ENCODE measurements at regions of chr4 and their contacts with region 1.

Region 1: DNA sequence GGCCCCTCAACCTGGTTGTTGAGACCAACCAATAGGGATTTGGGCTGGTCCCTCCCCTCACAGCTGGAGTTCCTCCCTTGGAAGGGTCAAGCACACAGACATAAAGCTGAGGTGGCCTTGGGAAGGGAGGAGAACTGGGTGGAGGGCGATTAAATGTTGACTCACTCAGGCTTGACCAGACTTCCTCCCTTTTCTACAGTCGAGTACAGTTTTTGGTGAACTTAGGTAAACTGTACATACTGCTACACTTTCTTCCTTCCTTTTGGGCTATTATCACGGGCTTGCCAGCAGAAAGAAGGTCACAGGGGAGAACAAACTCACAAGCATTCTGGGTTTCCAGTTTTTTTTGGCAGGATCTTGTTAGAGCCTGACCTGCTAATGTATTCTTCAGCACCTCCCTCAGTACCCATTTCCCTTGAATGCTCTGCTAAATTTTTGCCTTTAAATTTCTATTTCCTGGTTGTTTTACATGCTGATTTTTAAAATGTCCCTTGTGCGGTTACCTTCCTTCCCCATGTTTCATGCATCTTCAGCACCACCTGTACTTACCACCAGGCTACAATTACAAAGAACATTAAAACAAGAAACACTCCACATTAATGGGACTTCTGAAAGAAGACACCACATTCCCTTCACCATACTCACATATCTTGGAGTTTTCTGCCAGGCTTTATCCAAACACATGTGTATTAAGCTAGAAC is 135.2 kb upstream of the RASGEF1B start:
- DNase-seq: peak; percentile 79
- ATAC-seq: peak; percentile 51
- H3K4me3 ChIP-seq: peak overlapping the region in 4 of 5 experiments; percentile 21 to 40 (median 34)
- H3K4me3 Mint-ChIP-seq: peak overlapping the region; percentile 69
- H3K27ac ChIP-seq: peak overlapping the region; percentile 73 to 89
- H3K27ac Mint-ChIP-seq: peak overlapping the region; percentile 84
- H3K4me1 ChIP-seq: peaks cover 61 to 67% of the 10 kb centered on the region in 2 donors
- H3K4me1 Mint-ChIP-seq: peaks cover 58% of the 10 kb centered on the region
- H3K27me3 ChIP-seq: no peaks in the 10 kb centered on the region
- H3K27me3 Mint-ChIP-seq: no peaks in the 10 kb centered on the region
- CTCF ChIP-seq: peak; percentile 47

Region 2: DNA sequence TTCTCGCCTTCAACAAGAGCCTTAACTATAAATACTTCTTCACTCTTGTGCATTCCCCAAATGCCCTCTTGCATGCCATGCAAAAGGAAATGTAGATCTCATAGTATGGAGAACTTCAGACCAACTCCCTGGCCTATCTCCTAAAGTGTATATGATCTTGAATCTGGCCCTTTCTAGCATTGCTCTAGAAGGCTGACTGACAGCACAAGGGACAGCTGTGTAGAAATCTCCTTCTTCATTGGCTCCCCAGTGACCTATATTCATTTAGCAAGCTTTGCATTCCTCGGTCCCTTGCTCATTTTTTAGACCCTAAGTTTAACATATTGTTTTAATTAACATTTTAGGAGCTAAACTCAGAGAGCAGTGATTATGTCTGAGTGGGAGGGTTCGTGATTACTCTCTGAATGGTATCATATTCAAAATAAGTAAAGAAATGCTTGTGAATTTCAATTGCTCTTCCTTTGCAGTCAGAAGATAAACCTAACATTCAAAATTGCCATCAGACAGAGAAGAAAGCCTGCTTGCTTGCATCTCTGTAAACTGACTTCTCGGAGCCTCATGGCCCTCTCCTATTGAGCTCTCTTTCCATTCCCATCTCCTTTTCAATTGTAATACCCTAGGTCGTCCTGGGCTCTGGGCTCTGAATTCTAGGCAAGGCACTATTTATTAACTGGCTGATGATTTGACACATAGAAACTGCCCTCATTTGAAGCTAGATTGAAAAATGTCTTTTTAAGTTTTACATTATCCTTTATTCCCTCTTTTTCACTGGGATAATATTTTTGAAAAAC is 271.6 kb before region 1 on chr4:
- CTCF ChIA-PET with region 1: no interaction called
- POLR2A ChIA-PET with region 1: no interaction called
- intact Hi-C with region 1: no loop called
- DNase-seq: no peak
- ATAC-seq: no peak
- H3K4me3 ChIP-seq: no peak overlapping the region
- H3K4me3 Mint-ChIP-seq: no peak overlapping the region
- H3K27ac ChIP-seq: no peak overlapping the region
- H3K27ac Mint-ChIP-seq: no peak overlapping the region
- H3K4me1 ChIP-seq: no peaks in the 10 kb centered on the region
- H3K4me1 Mint-ChIP-seq: no peaks in the 10 kb centered on the region
- H3K27me3 ChIP-seq: no peaks in the 10 kb centered on the region
- H3K27me3 Mint-ChIP-seq: no peaks in the 10 kb centered on the region
- CTCF ChIP-seq: no peak

Region 3: GRCh38 chr4:81494031-81494431 is 112.9 kb before region 1 on chr4:
- CTCF ChIA-PET with region 1: no interaction called
- POLR2A ChIA-PET with region 1: interaction called, 4 read pairs
- intact Hi-C with region 1: loop called (anchors 5 kb)
- DNase-seq: peak; percentile 76
- ATAC-seq: peak; percentile 37
- H3K4me3 ChIP-seq: peak overlapping the region in 2 of 5 experiments; percentile 1 to 50
- H3K4me3 Mint-ChIP-seq: peak overlapping the region; percentile 76
- H3K27ac ChIP-seq: peak overlapping the region; percentile 59 to 80
- H3K27ac Mint-ChIP-seq: peak overlapping the region; percentile 85
- H3K4me1 ChIP-seq: peaks cover 43 to 54% of the 10 kb centered on the region in 2 donors
- H3K4me1 Mint-ChIP-seq: peaks cover 49% of the 10 kb centered on the region
- H3K27me3 ChIP-seq: no peaks in the 10 kb centered on the region
- H3K27me3 Mint-ChIP-seq: no peaks in the 10 kb centered on the region
- CTCF ChIP-seq: no peak

Region 4: GRCh38 chr4:81505004-81505598 is 101.8 kb before region 1 on chr4:
- CTCF ChIA-PET with region 1: no interaction called
- POLR2A ChIA-PET with region 1: interaction called, 9 read pairs
- intact Hi-C with region 1: loop called (anchors 5 kb)
- DNase-seq: peak; percentile 85
- ATAC-seq: peak; percentile 69
- H3K4me3 ChIP-seq: peak overlapping the region in 3 of 5 experiments; percentile 6 to 33 (median 28)
- H3K4me3 Mint-ChIP-seq: peak overlapping the region; percentile 81
- H3K27ac ChIP-seq: peak overlapping the region; percentile 56 to 81
- H3K27ac Mint-ChIP-seq: peak overlapping the region; percentile 88
- H3K4me1 ChIP-seq: peaks cover 45 to 58% of the 10 kb centered on the region in 2 donors
- H3K4me1 Mint-ChIP-seq: peaks cover 70% of the 10 kb centered on the region
- H3K27me3 ChIP-seq: no peaks in the 10 kb centered on the region
- H3K27me3 Mint-ChIP-seq: no peaks in the 10 kb centered on the region
- CTCF ChIP-seq: no peak

Region 5: GRCh38 chr4:81565142-81565870 is 41.6 kb before region 1 on chr4:
- CTCF ChIA-PET with region 1: interaction called, 5 read pairs
- POLR2A ChIA-PET with region 1: no interaction called
- intact Hi-C with region 1: loop called (anchors 1 kb)
- DNase-seq: no peak
- ATAC-seq: no peak
- H3K4me3 ChIP-seq: peak overlapping the region in 2 of 5 experiments; percentile 5 to 6
- H3K4me3 Mint-ChIP-seq: peak overlapping the region; percentile 61
- H3K27ac ChIP-seq: peak overlapping the region; percentile 4 to 21
- H3K27ac Mint-ChIP-seq: peak overlapping the region; percentile 64
- H3K4me1 ChIP-seq: peaks cover 54 to 65% of the 10 kb centered on the region in 2 donors
- H3K4me1 Mint-ChIP-seq: peaks cover 59% of the 10 kb centered on the region
- H3K27me3 ChIP-seq: no peaks in the 10 kb centered on the region
- H3K27me3 Mint-ChIP-seq: no peaks in the 10 kb centered on the region
- CTCF ChIP-seq: no peak

Region 6: GRCh38 chr4:81621490-81621889 is 14.5 kb after region 1 on chr4:
- CTCF ChIA-PET with region 1: interaction called, 5 read pairs
- POLR2A ChIA-PET with region 1: no interaction called
- intact Hi-C with region 1: loop called (anchors 2 kb)
- DNase-seq: no peak
- ATAC-seq: peak; percentile 17
- H3K4me3 ChIP-seq: no peak overlapping the region
- H3K4me3 Mint-ChIP-seq: no peak overlapping the region
- H3K27ac ChIP-seq: no peak overlapping the region
- H3K27ac Mint-ChIP-seq: no peak overlapping the region
- H3K4me1 ChIP-seq: peaks cover 19 to 20% of the 10 kb centered on the region in 2 donors
- H3K4me1 Mint-ChIP-seq: peaks cover 34% of the 10 kb centered on the region
- H3K27me3 ChIP-seq: no peaks in the 10 kb centered on the region
- H3K27me3 Mint-ChIP-seq: no peaks in the 10 kb centered on the region
- CTCF ChIP-seq: no peak

Region 7: GRCh38 chr4:81648576-81649275 is 41.8 kb after region 1 on chr4:
- CTCF ChIA-PET with region 1: no interaction called
- POLR2A ChIA-PET with region 1: no interaction called
- intact Hi-C with region 1: loop called (anchors 5 kb)
- DNase-seq: peak; percentile 69
- ATAC-seq: peak; percentile 86
- H3K4me3 ChIP-seq: peak overlapping the region in 2 of 5 experiments; percentile 5 to 24
- H3K4me3 Mint-ChIP-seq: peak overlapping the region; percentile 66
- H3K27ac ChIP-seq: no peak overlapping the region
- H3K27ac Mint-ChIP-seq: peak overlapping the region; percentile 16
- H3K4me1 ChIP-seq: peaks cover 26 to 36% of the 10 kb centered on the region in 2 donors
- H3K4me1 Mint-ChIP-seq: peaks cover 46% of the 10 kb centered on the region
- H3K27me3 ChIP-seq: no peaks in the 10 kb centered on the region
- H3K27me3 Mint-ChIP-seq: no peaks in the 10 kb centered on the region
- CTCF ChIP-seq: no peak